A549 (cell line): ENCODE measurements at regions of chr16 and their contacts with region 1.

Region 1: GRCh38 chr16:180938-181667 is 844 bp downstream of the HBQ1 start:
- DNase-seq: peak; percentile 88
- ATAC-seq: peak; percentile 71 to 78
- H3K4me3 ChIP-seq: peak overlapping the region; percentile 48
- H3K27ac ChIP-seq: peak overlapping the region; percentile 56 to 82; a peak in 5 of 6 replicates
- H3K4me1 ChIP-seq: peaks cover 9% of the 10 kb centered on the region; the same call in 1 of the 3 replicates
- CTCF ChIP-seq: peak; percentile 90
- EP300 ChIP-seq: no peak
- POLR2A ChIP-seq: no peak
- RAD21 ChIP-seq: peak; percentile 60 to 83

Region 2: DNA sequence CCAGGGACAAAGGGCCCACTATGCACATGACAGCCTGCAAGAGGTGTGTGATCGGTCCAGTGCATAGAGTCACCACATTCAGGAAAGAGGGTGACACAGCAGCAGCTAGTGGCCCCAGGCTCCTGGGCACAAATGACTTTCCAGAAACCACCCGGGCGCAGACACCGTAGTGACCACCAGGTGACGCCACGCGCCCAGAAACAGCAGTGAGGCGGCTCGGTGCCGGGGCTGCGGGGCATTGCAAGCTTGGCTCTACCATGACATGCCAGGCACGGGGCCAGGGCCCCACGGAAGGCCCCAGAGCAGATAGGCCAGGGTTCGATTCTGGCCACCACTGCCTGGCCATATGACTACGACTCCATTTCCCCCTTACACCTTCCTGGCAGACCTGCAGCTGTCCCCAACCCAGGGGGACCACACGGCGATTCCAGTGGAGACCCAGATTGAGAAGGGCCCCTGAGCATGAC is 115.4 kb before region 1 on chr16:
- CTCF ChIA-PET with region 1: interaction called, 72 read pairs
- POLR2A ChIA-PET with region 1: interaction called, 4 read pairs
- DNase-seq: peak; percentile 79 to 90
- ATAC-seq: peak; percentile 76 to 89
- H3K4me3 ChIP-seq: no peak overlapping the region
- H3K27ac ChIP-seq: no peak overlapping the region
- H3K4me1 ChIP-seq: no peaks in the 10 kb centered on the region; the same call in 2 of the 3 replicates
- CTCF ChIP-seq: peak; percentile 92
- EP300 ChIP-seq: no peak
- POLR2A ChIP-seq: no peak
- RAD21 ChIP-seq: peak; percentile 97 to 98

Region 3: GRCh38 chr16:117379-118365 is 63.4 kb before region 1 on chr16:
- CTCF ChIA-PET with region 1: interaction called, 37 read pairs
- POLR2A ChIA-PET with region 1: no interaction called
- DNase-seq: peak; percentile 70 to 74
- ATAC-seq: peak; percentile 81 to 92; a peak in 5 of 6 replicates
- H3K4me3 ChIP-seq: no peak overlapping the region
- H3K27ac ChIP-seq: peak overlapping the region in 1 of 2 experiments; percentile 13; a peak in 1 of 6 replicates
- H3K4me1 ChIP-seq: peaks cover 29% of the 10 kb centered on the region
- CTCF ChIP-seq: peak; percentile 65
- EP300 ChIP-seq: no peak
- POLR2A ChIP-seq: no peak
- RAD21 ChIP-seq: peak; percentile 57 to 58

Region 4: GRCh38 chr16:164827-165538 is 16.1 kb before region 1 on chr16:
- CTCF ChIA-PET with region 1: interaction called, 88 read pairs
- POLR2A ChIA-PET with region 1: no interaction called
- DNase-seq: no peak
- ATAC-seq: peak in 1 of 2 experiments; percentile 51; a peak in 3 of 6 replicates
- H3K4me3 ChIP-seq: peak overlapping the region; percentile 47
- H3K27ac ChIP-seq: 0 out of 6 replicates have a peak overlapping the region, but pooled peaks of 1 of the 2 experiments have one; percentile 1
- H3K4me1 ChIP-seq: peaks cover 13% of the 10 kb centered on the region
- CTCF ChIP-seq: no peak
- EP300 ChIP-seq: no peak
- POLR2A ChIP-seq: no peak
- RAD21 ChIP-seq: no peak

Region 5: GRCh38 chr16:212999-213398 is 31.9 kb after region 1 on chr16:
- CTCF ChIA-PET with region 1: interaction called, 12 read pairs
- POLR2A ChIA-PET with region 1: no interaction called
- DNase-seq: no peak
- ATAC-seq: no peak
- H3K4me3 ChIP-seq: no peak overlapping the region
- H3K27ac ChIP-seq: no peak overlapping the region
- H3K4me1 ChIP-seq: no peaks in the 10 kb centered on the region
- CTCF ChIP-seq: no peak
- EP300 ChIP-seq: no peak
- POLR2A ChIP-seq: no peak
- RAD21 ChIP-seq: no peak

Region 6: DNA sequence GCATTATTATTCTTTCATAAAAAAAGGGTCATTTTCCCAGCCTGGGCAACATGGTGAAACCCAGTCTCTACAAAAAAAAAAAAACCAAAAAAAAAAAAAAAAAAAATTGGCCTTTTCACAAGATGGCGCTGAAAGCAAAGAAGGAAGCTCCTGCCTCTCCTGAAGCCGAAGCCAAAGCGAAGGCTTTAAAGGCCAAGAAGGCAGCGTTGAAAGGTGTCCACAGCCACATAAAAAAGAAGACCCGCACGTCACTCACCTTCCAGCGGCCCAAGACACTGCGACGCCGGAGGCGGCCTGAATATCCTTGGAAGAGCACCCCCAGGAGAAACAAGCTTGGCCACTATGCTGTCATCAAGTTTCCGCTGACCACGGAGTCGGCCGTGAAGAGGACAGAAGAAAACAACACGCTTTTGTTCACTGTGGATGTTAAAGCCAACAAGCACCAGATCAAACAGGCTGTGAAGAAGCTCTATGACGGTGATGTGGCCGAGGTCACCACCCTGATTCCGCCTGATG is 205.6 kb after region 1 on chr16:
- CTCF ChIA-PET with region 1: no interaction called
- POLR2A ChIA-PET with region 1: no interaction called
- DNase-seq: no peak
- ATAC-seq: no peak
- H3K4me3 ChIP-seq: no peak overlapping the region
- H3K27ac ChIP-seq: no peak overlapping the region
- H3K4me1 ChIP-seq: peaks cover 6% of the 10 kb centered on the region; the same call in 1 of the 3 replicates
- CTCF ChIP-seq: peak; percentile 40
- EP300 ChIP-seq: no peak
- POLR2A ChIP-seq: no peak
- RAD21 ChIP-seq: peak; percentile 45 to 47; a peak in 4 of 5 replicates